WTC11 (cell line): ENCODE measurements at regions of chr17 and their contacts with region 1.

Region 1: DNA sequence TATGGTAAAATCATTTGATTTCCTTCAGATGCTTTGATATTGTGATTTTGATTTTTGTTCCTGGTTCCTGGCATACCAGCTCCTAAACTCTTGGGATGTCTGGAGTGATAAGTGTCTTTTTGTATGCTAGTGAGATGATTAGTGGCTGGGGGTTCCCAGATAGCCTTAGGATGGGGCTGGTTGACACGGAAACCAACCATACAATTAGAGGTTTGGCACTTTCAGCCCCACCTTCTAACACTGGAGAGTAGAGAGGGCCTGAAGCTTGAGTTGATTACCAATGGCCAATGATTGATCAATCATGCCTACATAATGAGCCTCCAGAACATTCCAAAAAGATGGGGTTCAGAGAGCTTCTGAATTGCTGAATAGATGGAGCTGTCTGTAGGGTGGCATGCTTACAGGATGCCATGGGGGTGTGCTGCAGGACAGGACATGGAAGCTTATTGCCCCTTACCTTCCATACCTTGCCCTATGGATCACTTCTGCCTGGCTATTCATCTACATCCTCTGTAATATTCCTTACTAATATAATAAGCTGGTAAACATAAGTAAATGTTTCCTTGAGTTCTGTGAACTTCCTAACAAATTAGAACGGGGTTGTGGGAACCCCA is 22.8 kb downstream of the RNF112 start:
- DNase-seq: no peak
- ATAC-seq: peak; percentile 54
- H3K4me3 Mint-ChIP-seq: no peak overlapping the region; the same call in 1 of the 2 replicates
- H3K27ac Mint-ChIP-seq: peak overlapping the region; percentile 60
- H3K4me1 Mint-ChIP-seq: peaks cover 59% of the 10 kb centered on the region
- H3K27me3 Mint-ChIP-seq: no peaks in the 10 kb centered on the region
- CTCF ChIP-seq: no peak

Region 2: DNA sequence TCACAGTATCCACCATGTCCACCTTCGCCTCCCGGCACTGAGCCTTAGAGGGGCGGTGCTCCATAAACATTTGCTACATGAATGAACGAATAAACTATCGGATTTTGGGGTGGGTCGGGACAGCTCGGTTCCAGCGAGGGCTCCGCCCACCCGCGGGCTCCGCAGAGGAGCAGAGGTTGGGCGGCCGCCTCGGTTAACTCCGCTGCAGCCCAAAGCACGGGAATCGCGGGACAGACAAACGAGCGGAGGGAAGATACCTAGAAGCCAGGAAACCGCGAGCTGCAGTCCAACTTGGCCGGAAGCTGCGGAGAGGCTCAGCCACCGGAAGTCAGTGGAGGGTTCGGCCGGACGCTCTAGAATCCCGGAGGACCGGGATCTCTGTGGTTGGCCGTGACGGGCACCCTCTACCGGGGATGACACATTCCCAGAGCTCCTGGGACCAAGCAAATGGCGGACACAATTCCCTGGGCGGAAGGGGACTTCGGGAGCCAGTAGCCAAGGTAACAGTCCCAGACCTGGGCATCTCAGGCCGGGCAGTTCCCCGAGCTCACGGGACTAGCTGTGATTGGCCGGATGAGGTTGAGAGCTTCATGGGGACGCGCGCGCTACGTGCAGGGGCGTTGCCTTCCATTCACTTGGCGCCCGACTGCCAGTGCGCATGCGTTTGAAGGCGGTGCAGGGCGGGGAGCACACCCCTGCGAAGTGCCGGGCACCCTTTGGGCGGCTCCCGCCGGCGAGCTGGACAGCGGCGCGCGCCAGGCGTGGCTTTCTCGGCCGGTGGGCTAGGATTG is 56.0 kb before region 1 on chr17:
- CTCF ChIA-PET with region 1: no interaction called
- POLR2A ChIA-PET with region 1: interaction called, 10 read pairs
- DNase-seq: peak; percentile 99
- ATAC-seq: peak; percentile 93
- H3K4me3 Mint-ChIP-seq: peak overlapping the region; percentile 99
- H3K27ac Mint-ChIP-seq: peak overlapping the region; percentile 97
- H3K4me1 Mint-ChIP-seq: peaks cover 16% of the 10 kb centered on the region
- H3K27me3 Mint-ChIP-seq: no peaks in the 10 kb centered on the region
- CTCF ChIP-seq: no peak

Region 3: DNA sequence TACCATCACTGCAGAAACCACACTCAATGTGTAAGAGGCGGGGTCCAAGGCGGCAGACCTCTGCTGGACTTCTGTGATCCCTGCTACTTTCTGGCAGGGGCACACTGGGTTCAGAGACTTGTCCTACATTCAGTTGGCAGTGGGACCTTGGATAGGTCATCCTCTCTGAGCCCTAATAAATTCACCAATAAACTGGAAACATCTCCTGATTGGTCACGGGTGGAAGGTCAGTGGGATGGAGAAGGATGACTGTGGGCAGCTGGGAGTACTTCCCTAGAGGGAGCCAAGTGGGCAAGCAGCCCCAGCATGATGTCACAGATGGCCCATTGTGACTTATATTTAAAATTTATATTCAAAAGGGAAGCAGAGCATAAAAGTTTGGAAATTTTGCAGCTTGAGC is 26.9 kb after region 1 on chr17:
- CTCF ChIA-PET with region 1: interaction called, 15 read pairs
- POLR2A ChIA-PET with region 1: no interaction called
- DNase-seq: no peak
- ATAC-seq: peak; percentile 9
- H3K4me3 Mint-ChIP-seq: peak overlapping the region; percentile 21
- H3K27ac Mint-ChIP-seq: peak overlapping the region; percentile 83
- H3K4me1 Mint-ChIP-seq: peaks cover 90% of the 10 kb centered on the region
- H3K27me3 Mint-ChIP-seq: no peaks in the 10 kb centered on the region
- CTCF ChIP-seq: no peak